Activated CD4-positive, alpha-beta memory T cell treated with anti-CD3 and anti-CD28 coated beads for 36 hours (primary cell): ENCODE measurements at regions of chr3 and their contacts with region 1.

Region 1: GRCh38 chr3:139111392-139112229 is 66.9 kb upstream of the PRR23C start:
- DNase-seq: peak; percentile 71
- H3K4me3 Mint-ChIP-seq: no peak overlapping the region
- H3K27ac Mint-ChIP-seq: no peak overlapping the region
- H3K4me1 Mint-ChIP-seq: peaks cover 1% of the 10 kb centered on the region
- H3K27me3 Mint-ChIP-seq: peaks cover 2% of the 10 kb centered on the region

Region 2: GRCh38 chr3:138578141-138578540 is 533.5 kb before region 1 on chr3:
- CTCF ChIA-PET with region 1: no interaction called
- POLR2A ChIA-PET with region 1: no interaction called
- intact Hi-C with region 1: loop called (anchors 10 kb)
- DNase-seq: no peak
- H3K4me3 Mint-ChIP-seq: no peak overlapping the region
- H3K27ac Mint-ChIP-seq: no peak overlapping the region
- H3K4me1 Mint-ChIP-seq: peaks cover 27% of the 10 kb centered on the region
- H3K27me3 Mint-ChIP-seq: no peaks in the 10 kb centered on the region

Region 3: DNA sequence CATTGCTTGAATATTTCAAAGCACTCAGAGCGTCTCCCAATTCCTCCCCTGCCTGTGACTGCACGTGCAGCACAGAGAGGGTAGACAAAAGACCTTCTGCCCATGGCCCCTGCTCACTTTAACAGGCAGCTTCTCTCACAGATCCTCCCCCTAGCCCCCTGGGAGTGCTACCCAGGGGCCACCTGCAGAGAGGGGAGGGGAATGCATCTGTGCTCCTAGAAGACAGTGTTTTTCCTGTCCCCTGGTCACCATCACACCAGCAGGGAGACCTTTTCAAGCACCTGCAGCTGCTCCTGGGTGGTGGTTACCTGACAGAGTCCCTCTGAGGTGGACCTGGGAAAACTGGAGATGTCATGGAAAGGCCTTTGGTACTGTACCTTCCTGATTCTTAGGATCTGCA is 10.2 kb before region 1 on chr3:
- CTCF ChIA-PET with region 1: interaction called, 25 read pairs
- POLR2A ChIA-PET with region 1: no interaction called
- intact Hi-C with region 1: no loop called
- DNase-seq: no peak
- H3K4me3 Mint-ChIP-seq: no peak overlapping the region
- H3K27ac Mint-ChIP-seq: no peak overlapping the region
- H3K4me1 Mint-ChIP-seq: no peaks in the 10 kb centered on the region
- H3K27me3 Mint-ChIP-seq: no peaks in the 10 kb centered on the region

Region 4: GRCh38 chr3:139202226-139202958 is 90.8 kb after region 1 on chr3:
- CTCF ChIA-PET with region 1: no interaction called
- POLR2A ChIA-PET with region 1: no interaction called
- intact Hi-C with region 1: loop called (anchors 2 kb)
- DNase-seq: peak; percentile 20
- H3K4me3 Mint-ChIP-seq: no peak overlapping the region
- H3K27ac Mint-ChIP-seq: no peak overlapping the region
- H3K4me1 Mint-ChIP-seq: no peaks in the 10 kb centered on the region
- H3K27me3 Mint-ChIP-seq: peaks cover 4% of the 10 kb centered on the region

Region 5: GRCh38 chr3:139343895-139344856 is 232.6 kb after region 1 on chr3 and contains the start of gene MRPS22:
- CTCF ChIA-PET with region 1: interaction called, 12 read pairs
- POLR2A ChIA-PET with region 1: no interaction called
- intact Hi-C with region 1: no loop called
- DNase-seq: peak; percentile 90
- H3K4me3 Mint-ChIP-seq: no peak within 1 kb of the TSS
- H3K27ac Mint-ChIP-seq: no peak within 1 kb of the TSS
- H3K4me1 Mint-ChIP-seq: peaks cover 10% of the 10 kb centered on the region
- H3K27me3 Mint-ChIP-seq: no peaks in the 10 kb centered on the region
- total RNA-seq, gene MRPS22: 49.9 to 50.2 TPM